Heart left ventricle (tissue), 16 donors: ENCODE measurements at regions of chr2 and their contacts with region 1.

Region 1: DNA sequence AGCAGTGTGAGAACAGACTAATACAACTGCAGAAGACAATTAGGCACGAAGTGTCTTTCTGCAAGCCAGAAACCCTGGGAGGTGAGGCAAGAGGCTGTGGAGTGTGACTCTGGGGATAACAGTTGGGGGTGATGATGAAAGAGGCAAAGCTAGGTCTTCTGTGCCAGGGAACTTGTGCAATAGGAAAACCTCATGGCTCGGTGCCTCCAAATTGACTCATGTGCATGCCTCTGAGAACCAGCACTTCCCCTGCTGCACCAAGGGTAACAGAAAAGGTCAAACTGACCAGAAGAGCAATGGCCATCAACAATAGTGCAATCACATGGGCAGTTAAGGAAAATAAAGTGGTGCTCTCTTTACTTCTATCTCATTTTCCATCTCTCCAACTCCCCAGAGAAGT is 136.4 kb downstream of the SCG2 start:
- DNase-seq: peak; percentile 52 to 85 (median 65)
- ATAC-seq: peak; percentile 54 to 97 (median 89)
- H3K4me3 ChIP-seq: no peak overlapping the region
- H3K27ac ChIP-seq: peak overlapping the region in 1 of 12 donors; percentile 56
- H3K4me1 ChIP-seq: peaks cover 0 to 32% (median under 1%) of the 10 kb centered on the region in 12 donors
- H3K27me3 ChIP-seq: no peaks in the 10 kb centered on the region
- CTCF ChIP-seq: no peak
- POLR2A ChIP-seq: no peak

Region 2: DNA sequence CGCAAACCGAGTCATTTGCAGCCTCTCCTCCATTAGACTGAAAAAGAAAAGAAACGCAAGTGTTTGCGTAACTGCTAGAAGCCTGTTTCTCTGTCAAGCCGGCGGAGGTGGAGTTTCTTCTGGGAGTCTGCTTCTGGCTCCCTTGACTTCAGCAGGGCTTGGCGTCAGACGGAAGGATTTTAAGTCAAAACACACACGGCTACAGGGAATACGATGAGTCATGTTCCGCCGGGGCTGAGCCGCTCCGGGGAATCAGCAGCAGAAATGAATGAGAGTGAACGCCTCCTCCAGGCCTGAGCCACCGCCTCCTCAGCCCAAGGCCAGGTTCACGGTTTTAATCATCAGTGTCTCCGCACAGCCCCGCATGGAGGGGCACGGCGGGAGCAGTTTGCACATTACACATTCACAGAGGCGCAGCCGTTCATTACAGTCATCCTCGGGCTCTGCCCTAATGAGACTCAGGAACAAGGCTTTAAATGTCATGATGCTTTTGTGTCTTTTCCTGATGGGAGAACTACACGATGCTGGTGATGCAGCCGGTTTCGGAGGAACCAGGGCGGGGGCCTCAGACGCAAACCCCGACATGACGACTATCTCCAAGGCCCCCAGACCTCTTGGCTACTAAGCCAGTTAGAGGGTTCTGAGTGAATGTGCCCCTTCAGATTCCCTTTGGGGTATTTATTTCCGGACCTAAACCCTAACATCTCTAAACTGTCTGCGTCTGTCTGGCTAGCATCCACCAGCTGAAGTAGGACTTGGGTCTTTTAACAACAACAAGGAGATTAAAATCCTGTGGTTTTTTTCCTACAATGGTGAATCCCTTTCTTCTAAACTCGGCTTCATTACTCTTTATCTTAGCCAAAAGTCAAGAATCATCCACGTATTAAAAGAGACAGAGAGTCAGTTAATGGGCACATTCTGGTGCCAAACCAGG is 147.5 kb after region 1 on chr2:
- intact Hi-C with region 1: loop called in 2 of 10 experiments (anchors 2 to 10 kb)
- DNase-seq: peak; percentile 81 to 86 (median 82)
- ATAC-seq: peak; percentile 90 to 99 (median 96)
- H3K4me3 ChIP-seq: peak overlapping the region in 10 of 12 donors; percentile 3 to 51 (median 31)
- H3K27ac ChIP-seq: peak overlapping the region in 10 of 12 donors; percentile 24 to 82 (median 72)
- H3K4me1 ChIP-seq: peaks cover 0 to 14% (median 2%) of the 10 kb centered on the region in 12 donors
- H3K27me3 ChIP-seq: peaks cover 0 to 11% (median 0%) of the 10 kb centered on the region in 9 donors
- CTCF ChIP-seq: peak in 2 of 12 donors; percentile 11 to 16
- POLR2A ChIP-seq: no peak